CD4-positive, alpha-beta memory T cell (primary cell): ENCODE measurements at regions of chr19 and their contacts with region 1.

Region 1: GRCh38 chr19:32570081-32570785 is 10.8 kb upstream of the PDCD5 start:
- DNase-seq: peak; percentile 49 to 68 (median 49)
- H3K4me3 ChIP-seq: no peak overlapping the region
- H3K4me3 Mint-ChIP-seq: peak overlapping the region in 4 of 8 donors; percentile 25 to 67 (median 50)
- H3K27ac ChIP-seq: no peak overlapping the region
- H3K27ac Mint-ChIP-seq: no peak overlapping the region
- H3K4me1 ChIP-seq: peaks cover 6% of the 10 kb centered on the region
- H3K4me1 Mint-ChIP-seq: peaks cover 8 to 17% (median 10%) of the 10 kb centered on the region in 4 donors
- H3K27me3 ChIP-seq: no peaks in the 10 kb centered on the region
- H3K27me3 Mint-ChIP-seq: peaks cover 12 to 13% of the 10 kb centered on the region in 2 donors

Region 2: GRCh38 chr19:32339988-32340874 is 230.0 kb before region 1 on chr19:
- CTCF ChIA-PET with region 1: interaction called, 41 read pairs
- POLR2A ChIA-PET with region 1: no interaction called
- intact Hi-C with region 1: no loop called
- DNase-seq: peak in 4 of 5 donors; percentile 11 to 28 (median 21)
- H3K4me3 ChIP-seq: no peak overlapping the region
- H3K4me3 Mint-ChIP-seq: no peak overlapping the region
- H3K27ac ChIP-seq: no peak overlapping the region
- H3K27ac Mint-ChIP-seq: peak overlapping the region in 2 of 7 donors; percentile 62 to 67
- H3K4me1 ChIP-seq: peaks cover 7% of the 10 kb centered on the region
- H3K4me1 Mint-ChIP-seq: peaks cover 0 to 3% (median 0%) of the 10 kb centered on the region in 4 donors
- H3K27me3 ChIP-seq: no peaks in the 10 kb centered on the region
- H3K27me3 Mint-ChIP-seq: peaks cover 0 to 1% of the 10 kb centered on the region in 2 donors

Region 3: GRCh38 chr19:32464279-32464678 is 106.0 kb before region 1 on chr19:
- CTCF ChIA-PET with region 1: interaction called, 12 read pairs
- POLR2A ChIA-PET with region 1: no interaction called
- intact Hi-C with region 1: loop called (anchors 1 kb)
- DNase-seq: no peak
- H3K4me3 ChIP-seq: no peak overlapping the region
- H3K4me3 Mint-ChIP-seq: no peak overlapping the region
- H3K27ac ChIP-seq: no peak overlapping the region
- H3K27ac Mint-ChIP-seq: no peak overlapping the region
- H3K4me1 ChIP-seq: peaks cover 1% of the 10 kb centered on the region
- H3K4me1 Mint-ChIP-seq: peaks cover 4 to 5% (median 5%) of the 10 kb centered on the region in 4 donors
- H3K27me3 ChIP-seq: no peaks in the 10 kb centered on the region
- H3K27me3 Mint-ChIP-seq: no peaks in the 10 kb centered on the region

Region 4: DNA sequence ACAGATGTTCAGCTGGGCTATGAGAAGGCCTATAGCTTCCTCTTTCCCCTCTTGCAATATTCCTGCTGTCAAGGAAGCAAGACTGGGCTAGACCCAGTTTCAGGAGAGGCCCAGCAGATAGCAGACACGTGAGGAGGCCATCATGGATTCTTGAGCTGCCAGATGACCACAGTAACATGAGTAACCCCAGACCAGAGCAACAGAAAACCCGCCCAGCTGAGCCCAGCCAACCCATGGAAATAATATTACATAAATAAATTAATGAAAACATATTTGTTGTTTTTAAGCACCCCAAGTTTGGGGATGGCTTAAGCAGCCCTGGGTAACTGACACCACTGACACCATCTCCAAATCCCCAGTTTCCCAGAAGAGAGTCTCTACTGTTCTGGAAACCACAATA is 39.5 kb before region 1 on chr19:
- CTCF ChIA-PET with region 1: no interaction called
- POLR2A ChIA-PET with region 1: no interaction called
- intact Hi-C with region 1: no loop called
- DNase-seq: no peak
- H3K4me3 ChIP-seq: no peak overlapping the region
- H3K4me3 Mint-ChIP-seq: no peak overlapping the region
- H3K27ac ChIP-seq: no peak overlapping the region
- H3K27ac Mint-ChIP-seq: no peak overlapping the region
- H3K4me1 ChIP-seq: no peaks in the 10 kb centered on the region
- H3K4me1 Mint-ChIP-seq: no peaks in the 10 kb centered on the region
- H3K27me3 ChIP-seq: no peaks in the 10 kb centered on the region
- H3K27me3 Mint-ChIP-seq: peaks cover 3 to 10% of the 10 kb centered on the region in 2 donors